PC-9 (cell line): ENCODE measurements at regions of chr17 and their contacts with region 1.

Region 1: GRCh38 chr17:80008383-80008840 is 27.3 kb downstream of the TBC1D16 start:
- DNase-seq: peak; percentile 40 to 83
- H3K4me3 ChIP-seq: no peak overlapping the region
- H3K27ac ChIP-seq: no peak overlapping the region
- H3K4me1 ChIP-seq: no peaks in the 10 kb centered on the region
- H3K27me3 ChIP-seq: no peaks in the 10 kb centered on the region
- CTCF ChIP-seq: peak; percentile 86

Region 2: DNA sequence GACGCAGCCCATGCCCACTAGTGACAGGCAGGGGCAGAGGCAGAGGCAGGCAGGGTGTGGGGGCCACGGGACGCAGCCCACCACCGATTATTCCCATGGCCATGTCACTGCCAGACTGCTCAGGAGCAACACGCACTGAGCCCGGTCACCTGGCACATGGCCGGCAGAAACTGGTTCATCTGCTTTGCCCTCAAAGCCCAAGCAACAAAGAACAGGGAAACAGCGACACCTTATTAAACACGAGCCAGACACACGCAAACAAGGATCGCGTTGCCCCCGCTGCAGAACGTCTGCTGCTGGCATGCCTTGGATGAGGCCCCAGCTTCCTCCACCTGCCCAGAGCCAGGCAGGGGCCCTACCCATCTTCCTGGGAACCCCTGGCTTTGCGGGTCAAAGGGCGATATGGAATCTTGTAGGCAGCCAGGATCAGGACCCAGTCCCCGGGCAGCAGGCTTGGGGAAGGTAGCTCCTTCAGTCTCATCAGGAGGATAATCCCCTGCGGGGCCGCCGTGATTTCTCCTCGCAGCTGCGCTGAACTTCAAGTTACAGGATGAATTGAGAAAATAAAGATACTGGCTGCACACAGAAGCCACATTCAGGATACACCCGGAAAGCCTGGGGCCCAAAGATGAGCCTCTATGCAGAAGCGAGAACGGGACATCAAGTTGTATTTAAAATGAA is 22.5 kb after region 1 on chr17:
- CTCF ChIA-PET with region 1: no interaction called
- POLR2A ChIA-PET with region 1: no interaction called
- intact Hi-C with region 1: loop called (anchors 2 kb)
- DNase-seq: peak; percentile 68 to 71
- H3K4me3 ChIP-seq: no peak overlapping the region
- H3K27ac ChIP-seq: no peak overlapping the region
- H3K4me1 ChIP-seq: peaks cover 21% of the 10 kb centered on the region
- H3K27me3 ChIP-seq: no peaks in the 10 kb centered on the region
- CTCF ChIP-seq: no peak

Region 3: GRCh38 chr17:80082403-80083135 is 74.2 kb after region 1 on chr17:
- CTCF ChIA-PET with region 1: interaction called, 3 read pairs
- POLR2A ChIA-PET with region 1: no interaction called
- intact Hi-C with region 1: loop called (anchors 1 kb)
- DNase-seq: peak in 1 of 2 experiments; percentile 65
- H3K4me3 ChIP-seq: no peak overlapping the region
- H3K27ac ChIP-seq: no peak overlapping the region
- H3K4me1 ChIP-seq: no peaks in the 10 kb centered on the region
- H3K27me3 ChIP-seq: peaks cover 10% of the 10 kb centered on the region; the same call in 1 of the 2 replicates
- CTCF ChIP-seq: peak; percentile 78

Region 4: GRCh38 chr17:80414803-80415625 is 406.6 kb after region 1 on chr17 and contains the start of gene ENDOV:
- CTCF ChIA-PET with region 1: no interaction called
- POLR2A ChIA-PET with region 1: no interaction called
- intact Hi-C with region 1: loop called (anchors 5 kb)
- DNase-seq: peak; percentile 67 to 88
- H3K4me3 ChIP-seq: peak within 1 kb of the TSS; percentile 67
- H3K27ac ChIP-seq: peak within 1 kb of the TSS; percentile 70
- H3K4me1 ChIP-seq: 0 out of 2 replicates have a peak, but pooled peaks cover 6% of the 10 kb centered on the region
- H3K27me3 ChIP-seq: no peaks in the 10 kb centered on the region
- CTCF ChIP-seq: no peak
- total RNA-seq, gene ENDOV: 50.3 and 84.8 TPM in 2 replicates

Region 5: DNA sequence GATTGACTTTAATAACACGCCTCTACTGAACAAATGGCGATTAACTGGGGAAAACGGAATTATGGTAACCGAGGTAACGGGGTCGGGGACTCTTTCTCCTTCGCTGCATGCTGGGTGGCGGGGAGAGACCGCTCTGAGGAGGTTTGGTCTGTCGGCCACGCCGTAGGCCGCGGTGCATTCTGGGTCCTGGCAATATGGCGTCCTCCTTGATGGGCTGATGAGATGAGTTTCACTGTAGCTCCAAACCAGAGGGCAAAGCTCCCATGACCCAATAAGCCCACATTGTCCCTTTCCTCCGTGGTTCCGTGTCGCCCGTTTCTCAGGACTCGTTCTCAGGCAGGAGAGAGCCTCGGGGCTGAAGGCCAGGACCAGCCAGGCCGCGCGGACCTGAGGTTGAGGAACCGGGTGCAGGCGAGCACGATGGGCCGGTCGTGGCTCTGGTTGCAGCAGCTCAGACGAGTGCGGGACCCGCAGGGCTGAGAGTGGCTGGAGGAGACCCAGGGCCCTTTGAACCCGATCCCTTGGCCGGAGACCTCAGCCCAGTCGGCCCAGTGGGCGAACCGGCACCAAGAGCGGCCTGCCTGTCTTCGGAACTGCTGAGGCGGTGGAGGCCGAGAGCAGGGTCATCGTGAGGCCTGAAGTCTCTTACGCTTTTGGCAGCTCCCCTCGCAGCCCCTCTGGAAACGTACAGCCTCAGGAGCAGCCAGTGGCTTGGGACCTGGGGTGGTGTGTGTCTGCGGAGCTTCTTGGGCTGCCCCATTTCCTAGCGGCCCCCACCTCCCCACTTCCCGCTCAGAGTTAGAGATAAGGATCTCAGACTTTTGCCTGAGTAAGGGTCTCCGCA is 536.5 kb after region 1 on chr17 and contains the start of gene RPTOR:
- CTCF ChIA-PET with region 1: interaction called, 13 read pairs
- POLR2A ChIA-PET with region 1: no interaction called
- intact Hi-C with region 1: no loop called
- DNase-seq: peak; percentile 48 to 81
- H3K4me3 ChIP-seq: peak within 1 kb of the TSS; percentile 98
- H3K27ac ChIP-seq: peak within 1 kb of the TSS; percentile 53
- H3K4me1 ChIP-seq: peaks cover 29% of the 10 kb centered on the region
- H3K27me3 ChIP-seq: no peaks in the 10 kb centered on the region
- CTCF ChIP-seq: no peak
- total RNA-seq, gene RPTOR: 50.8 and 53.5 TPM in 2 replicates